ENCODE measurements at regions of chrX and their contacts with region 1.

Region 1: DNA sequence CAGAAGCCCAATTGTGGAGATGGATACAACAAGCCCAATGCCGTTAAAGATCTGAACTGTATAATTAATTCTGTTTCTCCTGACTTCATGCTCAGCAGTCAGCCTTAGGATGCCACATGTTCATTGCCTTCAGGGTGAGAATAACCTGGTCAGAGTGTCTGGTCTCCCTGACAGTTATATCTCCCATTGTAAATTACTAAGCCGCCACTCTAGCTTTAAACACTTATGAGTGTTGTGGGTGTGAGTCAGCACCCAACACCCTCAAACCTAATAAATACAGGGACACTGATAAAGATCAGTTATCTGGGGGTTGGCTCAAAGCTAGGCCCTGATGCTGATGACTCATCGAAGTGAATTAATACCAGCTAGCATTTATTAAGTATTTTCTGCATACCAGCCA is 64.9 kb upstream of the DYNLT3 start:
- DNase-seq: no peak
- H3K4me3 ChIP-seq: no peak overlapping the region
- H3K27ac ChIP-seq: no peak overlapping the region
- H3K4me1 ChIP-seq: no peaks in the 10 kb centered on the region
- H3K27me3 ChIP-seq: no peaks in the 10 kb centered on the region
- CTCF ChIP-seq: no peak
- EP300 ChIP-seq: no peak
- POLR2A ChIP-seq: no peak

Region 2: DNA sequence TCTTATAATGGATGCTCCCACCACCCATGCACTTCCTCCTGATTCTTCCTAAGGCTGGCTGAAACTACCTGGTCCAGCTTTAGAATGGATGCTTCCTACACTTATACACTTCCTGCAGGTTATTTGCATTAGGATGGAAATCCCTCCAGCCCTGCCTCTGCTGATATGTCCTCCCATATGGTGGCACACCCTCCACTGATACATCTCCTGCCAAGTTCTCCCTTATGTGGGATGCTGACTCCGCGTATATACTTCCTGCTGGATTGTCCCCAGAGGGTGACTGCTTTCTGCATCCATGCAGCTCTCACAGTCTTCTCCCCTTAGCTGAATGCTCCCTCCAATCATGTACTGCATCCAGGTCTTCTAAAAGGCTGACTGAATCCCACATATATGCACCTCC is 1158.7 kb before region 1 on chrX:
- intact Hi-C with region 1: loop called in 1 of 4 experiments (anchors 5 kb)
- DNase-seq: no peak
- H3K4me3 ChIP-seq: no peak overlapping the region
- H3K27ac ChIP-seq: no peak overlapping the region
- H3K4me1 ChIP-seq: no peaks in the 10 kb centered on the region
- H3K27me3 ChIP-seq: no peaks in the 10 kb centered on the region
- CTCF ChIP-seq: no peak
- EP300 ChIP-seq: no peak
- POLR2A ChIP-seq: no peak

Region 3: GRCh38 chrX:38018766-38019425 is 106.6 kb after region 1 on chrX:
- intact Hi-C with region 1: no loop called
- DNase-seq: no peak
- H3K4me3 ChIP-seq: no peak overlapping the region
- H3K27ac ChIP-seq: no peak overlapping the region
- H3K4me1 ChIP-seq: no peaks in the 10 kb centered on the region
- H3K27me3 ChIP-seq: no peaks in the 10 kb centered on the region
- CTCF ChIP-seq: no peak
- EP300 ChIP-seq: no peak
- POLR2A ChIP-seq: no peak

Measured in ovary (tissue), 10 donors.